ENCODE measurements at regions of chr17 and their contacts with region 1.

Region 1: DNA sequence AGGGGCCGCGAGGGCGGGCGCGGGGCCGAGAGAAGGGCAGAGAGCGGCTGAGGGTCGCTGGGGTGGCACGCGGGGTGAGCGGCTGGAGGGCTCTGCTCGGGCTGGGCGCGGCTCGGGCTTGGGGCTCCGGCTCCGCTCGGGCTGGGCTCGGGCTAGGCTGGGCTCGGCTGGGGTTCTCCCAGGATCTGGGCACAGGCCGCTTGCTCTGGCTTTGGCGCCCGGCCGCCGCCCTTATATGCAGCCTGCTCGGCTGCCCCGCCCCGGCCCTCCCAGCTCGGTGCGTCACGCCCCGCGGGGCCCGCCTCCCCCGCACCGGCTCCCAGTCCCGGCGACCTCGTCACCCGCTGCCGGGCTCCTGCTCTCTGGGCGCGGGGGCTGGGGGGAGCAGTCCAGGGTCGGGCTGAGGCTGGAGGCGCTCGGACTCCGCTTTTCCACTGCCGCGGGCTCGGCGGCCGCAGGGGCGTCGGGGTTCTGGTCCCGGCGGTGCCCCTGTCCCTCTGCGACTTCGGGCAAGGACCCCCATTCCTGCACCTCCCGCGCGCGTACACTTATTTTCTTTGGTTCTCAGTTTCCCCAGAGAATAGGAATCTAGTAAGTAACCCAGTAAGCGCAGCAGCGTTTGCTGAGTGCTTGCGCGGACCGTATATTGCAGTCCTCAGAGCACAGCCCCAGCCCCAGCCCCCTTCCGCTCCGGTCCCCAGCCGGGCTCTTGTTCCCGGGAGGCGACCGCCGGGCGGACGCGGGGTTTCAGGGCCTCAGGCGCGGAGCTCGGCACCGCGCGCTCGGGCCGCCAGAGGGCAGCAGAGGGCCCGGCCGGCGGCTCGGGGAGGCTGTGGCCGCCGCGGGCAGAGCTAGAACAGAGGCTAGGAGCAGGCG is at the start of gene RASD1:
- DNase-seq: peak; percentile 88
- H3K4me3 Mint-ChIP-seq: peak within 1 kb of the TSS; percentile 62
- H3K27ac Mint-ChIP-seq: no peak within 1 kb of the TSS
- H3K4me1 Mint-ChIP-seq: peaks cover 16% of the 10 kb centered on the region
- H3K27me3 Mint-ChIP-seq: peaks cover 7% of the 10 kb centered on the region
- total RNA-seq, gene RASD1: 0.27 to 0.33 TPM

Region 2: GRCh38 chr17:17391668-17392370 is 104.6 kb before region 1 on chr17:
- CTCF ChIA-PET with region 1: interaction called, 12 read pairs
- POLR2A ChIA-PET with region 1: no interaction called
- intact Hi-C with region 1: no loop called
- DNase-seq: peak; percentile 81
- H3K4me3 Mint-ChIP-seq: peak overlapping the region; percentile 71
- H3K27ac Mint-ChIP-seq: peak overlapping the region; percentile 2
- H3K4me1 Mint-ChIP-seq: peaks cover 15% of the 10 kb centered on the region
- H3K27me3 Mint-ChIP-seq: no peaks in the 10 kb centered on the region

Region 3: GRCh38 chr17:17435323-17435722 is 61.1 kb before region 1 on chr17:
- CTCF ChIA-PET with region 1: no interaction called
- POLR2A ChIA-PET with region 1: no interaction called
- intact Hi-C with region 1: no loop called
- DNase-seq: no peak
- H3K4me3 Mint-ChIP-seq: no peak overlapping the region
- H3K27ac Mint-ChIP-seq: no peak overlapping the region
- H3K4me1 Mint-ChIP-seq: peaks cover 4% of the 10 kb centered on the region
- H3K27me3 Mint-ChIP-seq: no peaks in the 10 kb centered on the region

Region 4: GRCh38 chr17:17484451-17484899 is 12.0 kb before region 1 on chr17:
- CTCF ChIA-PET with region 1: interaction called, 14 read pairs
- POLR2A ChIA-PET with region 1: no interaction called
- intact Hi-C with region 1: no loop called
- DNase-seq: peak; percentile 82
- H3K4me3 Mint-ChIP-seq: no peak overlapping the region
- H3K27ac Mint-ChIP-seq: peak overlapping the region; percentile 81
- H3K4me1 Mint-ChIP-seq: peaks cover 56% of the 10 kb centered on the region
- H3K27me3 Mint-ChIP-seq: no peaks in the 10 kb centered on the region

Region 5: DNA sequence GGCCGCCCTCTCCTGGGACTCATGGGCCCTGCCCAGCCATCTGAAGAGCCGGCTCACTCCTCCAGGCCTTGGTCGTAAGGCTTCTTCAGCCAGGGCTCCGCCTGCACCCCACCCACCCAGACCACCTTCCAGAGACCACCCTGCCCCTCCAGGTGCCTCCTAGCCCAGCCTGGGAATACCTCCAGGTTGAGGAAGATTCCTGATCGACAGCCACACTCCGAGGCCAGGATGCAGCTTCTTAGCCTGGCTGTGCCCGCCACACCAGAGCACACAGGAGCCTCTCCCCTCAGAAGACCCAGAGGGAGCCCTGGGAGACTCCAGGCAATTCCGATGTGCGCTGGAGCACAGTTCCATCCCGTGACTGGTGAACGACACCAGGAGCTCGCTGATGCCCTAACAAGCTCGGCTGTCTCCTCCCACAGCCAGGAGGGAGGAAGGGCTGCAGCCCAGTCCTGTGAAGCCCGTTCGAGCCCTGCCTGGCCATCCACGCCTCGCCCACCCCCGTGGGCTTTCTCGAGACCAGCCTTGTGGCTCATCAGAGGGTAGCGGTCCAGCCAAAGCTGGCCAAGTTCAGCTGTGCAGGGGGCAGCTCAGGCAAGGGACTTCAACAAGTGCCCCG is 21.5 kb after region 1 on chr17:
- CTCF ChIA-PET with region 1: no interaction called
- POLR2A ChIA-PET with region 1: no interaction called
- intact Hi-C with region 1: no loop called
- DNase-seq: no peak
- H3K4me3 Mint-ChIP-seq: no peak overlapping the region
- H3K27ac Mint-ChIP-seq: no peak overlapping the region
- H3K4me1 Mint-ChIP-seq: no peaks in the 10 kb centered on the region
- H3K27me3 Mint-ChIP-seq: no peaks in the 10 kb centered on the region

Region 6: DNA sequence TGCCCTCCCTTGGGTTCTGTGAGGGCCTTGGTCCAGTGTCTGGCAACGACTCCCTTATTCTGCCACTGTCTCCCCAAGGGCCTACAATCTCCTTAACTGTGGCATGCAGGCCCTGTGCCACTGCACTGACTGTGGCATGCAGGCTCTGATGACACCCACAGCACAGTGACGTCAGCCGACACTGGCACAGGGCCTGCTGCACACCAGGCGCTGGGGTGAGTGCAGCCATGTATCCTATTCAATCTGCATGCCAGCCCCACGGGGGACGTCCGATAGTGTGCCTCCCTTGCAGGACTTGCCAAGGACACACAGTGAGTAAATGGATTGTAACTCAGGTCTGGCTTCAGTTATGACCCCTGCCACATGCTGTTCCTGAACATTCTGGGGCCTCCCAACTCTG is 39.5 kb after region 1 on chr17:
- CTCF ChIA-PET with region 1: interaction called, 10 read pairs
- POLR2A ChIA-PET with region 1: no interaction called
- intact Hi-C with region 1: no loop called
- DNase-seq: no peak
- H3K4me3 Mint-ChIP-seq: no peak overlapping the region
- H3K27ac Mint-ChIP-seq: no peak overlapping the region
- H3K4me1 Mint-ChIP-seq: no peaks in the 10 kb centered on the region
- H3K27me3 Mint-ChIP-seq: no peaks in the 10 kb centered on the region

Region 7: DNA sequence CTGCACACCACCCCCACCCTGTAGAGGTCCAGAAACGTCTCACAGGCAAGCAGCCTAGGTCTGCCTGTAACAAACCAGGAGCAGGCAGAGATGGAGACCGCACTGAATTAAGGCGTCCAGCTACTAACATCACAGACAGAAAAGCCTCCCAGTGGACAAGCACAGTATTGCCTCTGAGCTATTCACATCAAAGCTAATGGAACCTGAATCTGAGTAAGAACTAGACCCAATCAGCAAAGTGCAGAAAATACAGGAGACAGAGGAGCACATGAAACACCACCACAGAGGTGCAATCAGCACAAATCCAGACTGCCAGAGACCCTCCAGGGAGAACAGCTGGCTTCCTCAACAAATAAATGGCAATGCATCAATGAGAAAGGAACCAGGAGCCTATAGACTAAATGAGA is 117.3 kb after region 1 on chr17:
- CTCF ChIA-PET with region 1: interaction called, 36 read pairs
- POLR2A ChIA-PET with region 1: interaction called, 4 read pairs
- intact Hi-C with region 1: no loop called
- DNase-seq: peak; percentile 60
- H3K4me3 Mint-ChIP-seq: no peak overlapping the region
- H3K27ac Mint-ChIP-seq: no peak overlapping the region
- H3K4me1 Mint-ChIP-seq: no peaks in the 10 kb centered on the region
- H3K27me3 Mint-ChIP-seq: no peaks in the 10 kb centered on the region

Measured in activated CD4-positive, alpha-beta memory T cell treated with anti-CD3 and anti-CD28 coated beads for 36 hours (primary cell).